WTC11 (cell line): ENCODE measurements at regions of chr22 and their contacts with region 1.

Region 1: DNA sequence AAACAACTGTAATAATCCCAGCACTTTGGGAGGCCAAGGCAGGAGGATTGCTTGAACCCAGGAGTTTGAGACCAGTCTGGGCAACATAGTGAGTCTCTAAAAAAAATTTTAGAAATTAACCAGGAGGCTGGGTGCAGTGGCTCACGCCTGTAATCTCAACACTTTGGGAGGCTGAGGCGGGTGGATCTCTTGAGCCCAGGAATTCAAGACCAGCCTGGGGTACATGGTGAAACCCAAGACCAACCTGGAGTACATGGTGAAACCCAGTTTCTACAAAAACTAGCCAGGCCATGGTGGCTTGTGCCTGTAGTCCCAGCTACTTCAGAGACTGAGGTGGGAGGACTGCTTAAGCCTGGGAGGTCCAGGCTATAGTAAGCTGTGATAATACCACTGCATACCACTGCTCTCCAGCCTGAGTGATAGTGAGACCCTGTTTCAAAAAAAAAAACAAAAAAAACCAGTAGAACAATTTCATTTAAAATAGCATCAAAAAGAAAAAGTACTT is 11.2 kb downstream of the PI4KA start:
- DNase-seq: no peak
- ATAC-seq: no peak
- H3K4me3 Mint-ChIP-seq: no peak overlapping the region
- H3K27ac Mint-ChIP-seq: no peak overlapping the region
- H3K4me1 Mint-ChIP-seq: peaks cover 14% of the 10 kb centered on the region
- H3K27me3 Mint-ChIP-seq: no peaks in the 10 kb centered on the region
- CTCF ChIP-seq: no peak

Region 2: GRCh38 chr22:20803696-20804324 is 43.6 kb before region 1 on chr22:
- CTCF ChIA-PET with region 1: interaction called, 10 read pairs
- POLR2A ChIA-PET with region 1: no interaction called
- DNase-seq: peak; percentile 71
- ATAC-seq: peak; percentile 89
- H3K4me3 Mint-ChIP-seq: no peak overlapping the region
- H3K27ac Mint-ChIP-seq: no peak overlapping the region; the same call in 1 of the 2 replicates
- H3K4me1 Mint-ChIP-seq: no peaks in the 10 kb centered on the region
- H3K27me3 Mint-ChIP-seq: no peaks in the 10 kb centered on the region
- CTCF ChIP-seq: peak; percentile 47; the same call in 1 of the 2 replicates

Region 3: GRCh38 chr22:20981787-20982562 is 134.6 kb after region 1 on chr22 and contains the start of gene LZTR1:
- CTCF ChIA-PET with region 1: no interaction called
- POLR2A ChIA-PET with region 1: no interaction called
- DNase-seq: peak; percentile 81
- ATAC-seq: peak; percentile 69
- H3K4me3 Mint-ChIP-seq: peak within 1 kb of the TSS; percentile 96
- H3K27ac Mint-ChIP-seq: peak within 1 kb of the TSS; percentile 85
- H3K4me1 Mint-ChIP-seq: peaks cover 30% of the 10 kb centered on the region
- H3K27me3 Mint-ChIP-seq: peaks cover 32% of the 10 kb centered on the region
- CTCF ChIP-seq: no peak
- total RNA-seq, gene LZTR1: 38.3 to 44.5 TPM (median 40.1 TPM) in 3 replicates